Activated T-helper 2 cell treated with anti-CD3 and anti-CD28 coated beads, Interferon-gamma antibody, Interleukin-2, Interleukin-4, amounts not matched to agents 10 μg/mL and 5 μg/mL and 100 μg/mL, durations not matched to agents 14 hours and 24 hours and 36 hours (primary cell): ENCODE measurements at regions of chr10 and their contacts with region 1.

Region 1: GRCh38 chr10:43138021-43138756 is at the start of gene CSGALNACT2:
- DNase-seq: peak; percentile 88
- H3K4me3 Mint-ChIP-seq: peak within 1 kb of the TSS; percentile 96
- H3K27ac Mint-ChIP-seq: peak within 1 kb of the TSS; percentile 100
- H3K4me1 Mint-ChIP-seq: peaks cover 55% of the 10 kb centered on the region
- H3K27me3 Mint-ChIP-seq: no peaks in the 10 kb centered on the region
- total RNA-seq, gene CSGALNACT2: 25.2 and 25.6 TPM in 2 replicates

Region 2: DNA sequence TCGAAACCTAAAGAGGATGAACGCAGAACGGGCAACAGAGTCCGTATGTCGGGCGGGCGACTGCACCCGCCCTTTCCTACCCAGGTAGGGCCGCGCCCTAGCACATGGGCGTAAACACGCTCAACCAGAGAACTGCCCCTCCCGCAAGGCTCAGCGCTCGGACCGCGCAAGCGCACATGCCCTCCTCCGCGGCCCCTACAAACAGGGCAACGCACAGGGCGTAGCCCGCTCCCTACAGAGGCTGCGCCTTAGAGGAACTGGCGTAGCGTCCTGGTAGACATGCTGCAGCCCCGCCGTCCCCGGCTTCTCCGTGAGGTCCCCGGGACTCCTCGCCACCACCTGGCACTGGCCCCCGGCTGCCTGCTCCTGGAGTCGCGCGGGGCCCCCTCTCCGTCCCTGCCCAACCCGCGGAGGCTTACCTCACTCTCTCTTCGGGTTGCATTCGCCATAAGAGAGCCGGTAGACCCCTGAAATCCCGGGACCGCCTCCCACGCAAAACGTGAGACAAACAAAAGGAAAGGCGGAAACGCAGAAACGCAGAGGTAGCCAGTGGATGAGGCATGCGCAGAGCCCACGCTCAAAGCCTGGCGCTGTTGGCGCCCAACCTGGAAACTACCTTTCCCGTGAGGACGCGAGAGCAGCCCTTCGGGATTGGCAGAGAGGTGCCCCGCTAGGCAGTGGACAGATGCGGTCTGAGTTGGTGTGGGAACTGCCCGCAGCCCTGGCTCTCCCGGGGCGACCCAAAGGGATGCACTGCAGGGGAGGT is 500.0 kb before region 1 on chr10 and contains the start of gene ZNF33B:
- intact Hi-C with region 1: loop called (anchors 5 kb)
- DNase-seq: peak; percentile 95
- H3K4me3 Mint-ChIP-seq: peak within 1 kb of the TSS; percentile 96
- H3K27ac Mint-ChIP-seq: peak within 1 kb of the TSS; percentile 98
- H3K4me1 Mint-ChIP-seq: peaks cover 25% of the 10 kb centered on the region
- H3K27me3 Mint-ChIP-seq: no peaks in the 10 kb centered on the region
- total RNA-seq, gene ZNF33B: 6.3 and 6.5 TPM in 2 replicates

Region 3: GRCh38 chr10:43120929-43121314 is 17.3 kb before region 1 on chr10:
- intact Hi-C with region 1: loop called (anchors 1 kb)
- DNase-seq: peak; percentile 72
- H3K4me3 Mint-ChIP-seq: peak overlapping the region; percentile 53
- H3K27ac Mint-ChIP-seq: peak overlapping the region; percentile 88
- H3K4me1 Mint-ChIP-seq: peaks cover 33% of the 10 kb centered on the region
- H3K27me3 Mint-ChIP-seq: no peaks in the 10 kb centered on the region

Region 4: GRCh38 chr10:43160046-43160918 is 22.1 kb after region 1 on chr10:
- intact Hi-C with region 1: loop called (anchors 1 kb)
- DNase-seq: no peak
- H3K4me3 Mint-ChIP-seq: no peak overlapping the region
- H3K27ac Mint-ChIP-seq: peak overlapping the region; percentile 93
- H3K4me1 Mint-ChIP-seq: peaks cover 44% of the 10 kb centered on the region
- H3K27me3 Mint-ChIP-seq: no peaks in the 10 kb centered on the region

Region 5: GRCh38 chr10:43204943-43205671 is 66.9 kb after region 1 on chr10:
- intact Hi-C with region 1: loop called (anchors 2 kb)
- DNase-seq: peak; percentile 30
- H3K4me3 Mint-ChIP-seq: no peak overlapping the region
- H3K27ac Mint-ChIP-seq: no peak overlapping the region
- H3K4me1 Mint-ChIP-seq: peaks cover 7% of the 10 kb centered on the region
- H3K27me3 Mint-ChIP-seq: no peaks in the 10 kb centered on the region

Region 6: DNA sequence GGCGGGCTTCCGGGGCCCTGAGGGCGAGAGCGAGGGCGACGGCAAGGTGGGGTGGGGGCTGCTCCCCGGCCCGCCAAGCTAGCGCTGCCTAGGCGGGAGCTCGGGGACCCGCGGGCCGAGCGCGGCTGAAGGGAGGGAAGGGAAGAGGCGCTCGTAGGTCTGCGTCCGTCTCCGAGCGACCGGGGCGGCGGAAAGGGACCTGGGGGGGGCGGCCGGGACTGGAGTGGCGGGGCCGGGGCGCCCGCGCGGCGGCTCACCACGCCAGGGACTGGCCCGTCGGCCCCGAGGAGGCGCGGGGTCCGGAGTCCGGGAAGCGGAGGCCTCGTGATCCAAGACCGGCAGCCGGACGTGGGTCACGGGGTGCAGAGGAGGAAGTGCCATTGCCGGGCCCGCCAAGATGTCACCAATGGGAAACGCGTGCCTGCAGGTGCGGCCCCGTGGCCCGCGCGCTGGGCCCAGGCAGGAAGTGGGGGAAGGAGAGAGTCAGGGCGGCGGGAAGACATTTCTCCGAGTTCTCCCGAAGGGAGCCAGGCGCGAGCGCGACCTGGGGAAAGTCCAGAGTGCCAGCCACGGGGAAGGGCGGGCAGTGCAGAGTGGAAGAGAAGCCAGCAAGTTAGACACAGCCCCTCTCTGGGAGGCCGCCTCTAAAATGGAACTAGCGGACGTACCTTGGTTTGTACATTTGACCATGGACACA is 258.9 kb after region 1 on chr10:
- intact Hi-C with region 1: loop called (anchors 5 kb)
- DNase-seq: peak; percentile 84
- H3K4me3 Mint-ChIP-seq: peak overlapping the region; percentile 86
- H3K27ac Mint-ChIP-seq: peak overlapping the region; percentile 93
- H3K4me1 Mint-ChIP-seq: peaks cover 62% of the 10 kb centered on the region
- H3K27me3 Mint-ChIP-seq: no peaks in the 10 kb centered on the region

Region 7: DNA sequence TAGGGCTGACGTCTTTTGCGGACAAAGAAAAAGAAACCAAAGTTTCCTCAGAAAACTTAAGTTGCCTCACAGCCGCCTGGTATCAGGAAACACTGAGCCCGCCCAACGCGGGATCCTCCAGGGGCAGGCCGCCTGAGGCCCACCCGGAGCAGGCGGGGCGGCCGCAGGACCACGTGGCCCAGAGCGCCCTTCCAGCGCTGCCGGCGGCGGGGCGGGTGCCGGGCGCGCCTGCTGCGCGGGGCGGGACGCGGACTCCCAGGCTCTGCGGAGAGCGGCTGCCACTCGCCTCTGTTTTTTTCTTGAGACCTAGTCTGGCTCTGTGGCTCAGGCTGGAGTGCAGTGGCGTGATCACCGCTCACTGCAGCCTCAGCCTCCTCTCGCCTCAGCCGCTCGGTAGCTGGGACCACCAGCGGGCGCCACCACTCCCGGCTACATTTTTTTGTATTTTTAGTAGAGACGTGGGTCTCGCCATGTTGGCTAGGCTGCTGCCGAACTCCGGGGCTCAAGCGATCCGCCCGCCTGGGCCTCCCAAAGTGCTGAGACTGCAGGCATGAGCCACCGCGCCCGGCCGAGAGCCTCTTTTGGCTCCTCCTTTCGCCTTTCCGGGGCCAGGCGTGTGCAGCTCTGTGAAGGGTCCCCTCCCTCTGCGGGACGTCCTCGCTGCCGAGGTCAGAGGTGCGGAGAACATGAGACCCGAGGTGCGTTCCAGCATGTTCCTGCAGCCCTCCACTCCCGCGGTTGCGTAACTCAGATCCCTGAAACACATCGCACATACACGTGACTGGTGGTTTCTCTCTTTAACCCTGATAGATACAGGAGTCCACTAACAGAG is 282.4 kb after region 1 on chr10:
- intact Hi-C with region 1: loop called (anchors 1 kb)
- DNase-seq: peak; percentile 80
- H3K4me3 Mint-ChIP-seq: peak overlapping the region; percentile 82
- H3K27ac Mint-ChIP-seq: peak overlapping the region; percentile 98
- H3K4me1 Mint-ChIP-seq: peaks cover 30% of the 10 kb centered on the region
- H3K27me3 Mint-ChIP-seq: no peaks in the 10 kb centered on the region